ENCODE measurements at regions of chr5 and their contacts with region 1.

Region 1: GRCh38 chr5:16456103-16456832 is 9.3 kb downstream of the ZNF622 start:
- DNase-seq: no peak

Region 2: DNA sequence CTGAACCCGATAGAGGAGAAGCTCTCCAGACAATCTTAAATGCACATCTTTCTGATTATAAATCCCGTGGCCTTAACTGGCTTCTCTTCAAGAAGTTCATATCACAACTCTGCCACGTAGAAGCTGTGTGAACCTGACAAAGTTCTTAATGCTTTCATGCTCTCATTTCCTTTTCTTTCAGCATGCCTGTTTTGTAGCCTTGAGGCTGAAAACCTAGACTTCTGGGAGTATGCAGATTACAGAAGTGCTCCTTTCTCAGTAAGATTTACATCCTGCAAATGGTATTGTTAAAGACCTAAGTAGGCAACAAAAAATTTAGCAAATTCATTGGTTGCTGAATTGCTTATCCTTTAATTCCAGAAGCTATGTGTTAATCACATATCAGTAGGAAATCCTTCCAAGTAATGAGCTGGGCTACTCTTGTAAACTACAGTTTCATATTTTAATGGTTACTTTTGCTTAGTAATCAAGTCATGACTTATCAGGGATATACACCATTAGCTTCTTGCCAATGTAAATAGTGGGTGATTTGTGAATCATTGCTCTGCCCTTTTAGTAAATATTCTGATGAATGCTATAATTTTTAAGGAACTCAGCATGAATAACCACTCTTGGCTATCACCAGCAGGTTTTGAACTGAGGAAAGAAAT is 621.5 kb before region 1 on chr5:
- intact Hi-C with region 1: loop called (anchors 10 kb)
- DNase-seq: no peak

Region 3: DNA sequence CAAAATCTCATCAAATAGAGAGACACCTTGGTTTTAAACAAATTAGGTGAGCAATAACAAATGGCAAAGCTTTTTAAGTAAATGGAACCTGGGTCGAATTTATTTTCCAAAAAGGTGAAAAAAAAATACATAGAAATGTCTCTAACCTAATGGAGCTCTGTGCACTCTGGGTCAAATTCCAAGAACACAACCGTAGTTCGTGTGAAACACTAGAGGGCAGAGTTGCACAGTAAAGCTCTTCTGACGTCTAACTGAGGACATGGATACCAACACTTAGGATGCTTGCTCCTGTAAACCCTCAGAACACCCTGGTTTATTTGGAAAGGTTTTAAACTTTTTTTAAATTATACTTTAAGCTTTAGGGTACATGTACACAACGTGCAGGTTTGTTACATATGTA is 295.6 kb before region 1 on chr5:
- intact Hi-C with region 1: loop called (anchors 2 kb)
- DNase-seq: no peak

Region 4: GRCh38 chr5:16178745-16179372 is 277.4 kb before region 1 on chr5:
- intact Hi-C with region 1: loop called (anchors 5 kb)
- DNase-seq: peak; percentile 82

Region 5: GRCh38 chr5:16345454-16345853 is 110.8 kb before region 1 on chr5:
- intact Hi-C with region 1: loop called (anchors 5 kb)
- DNase-seq: no peak